ENCODE measurements at regions of chr7 and their contacts with region 1.

Region 1: DNA sequence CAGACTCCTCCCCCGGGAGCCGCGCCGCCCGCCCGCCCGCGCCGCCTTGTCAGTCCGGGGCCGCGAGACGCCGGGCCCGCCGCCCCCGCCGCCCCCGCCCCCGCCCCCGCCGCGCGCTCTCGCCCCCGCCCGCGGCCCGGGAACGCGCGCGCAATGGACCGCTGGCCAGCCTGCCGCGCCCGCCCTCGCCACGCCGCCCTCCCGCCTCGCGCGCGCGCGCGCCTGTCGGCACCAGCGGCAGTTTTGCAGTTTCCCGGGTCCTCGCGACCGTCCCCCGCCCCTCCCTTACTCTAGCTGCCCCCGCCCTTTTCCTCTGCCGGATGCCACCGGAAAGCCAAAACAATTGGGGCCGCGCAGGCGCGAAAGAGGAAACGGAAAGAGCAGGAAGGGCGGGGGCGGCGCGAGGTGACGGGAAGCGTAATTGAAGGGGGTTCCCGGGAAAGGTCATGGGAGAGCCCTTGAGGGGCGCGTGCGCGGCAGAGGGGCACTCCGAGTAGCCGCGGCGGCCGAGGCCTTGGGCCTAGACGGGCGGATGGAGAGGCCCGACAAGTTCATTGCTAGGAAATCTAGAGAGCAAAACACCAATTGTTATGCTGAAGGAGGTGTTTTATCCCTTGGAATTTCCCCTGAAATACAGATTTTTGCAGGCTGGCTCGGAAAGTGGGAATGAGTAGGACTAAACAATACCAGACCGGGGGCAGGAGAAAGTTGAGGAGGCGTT is 400 bp upstream of the KBTBD2 start:
- DNase-seq: peak; percentile 97
- H3K4me3 Mint-ChIP-seq: peak overlapping the region; percentile 93
- H3K27ac Mint-ChIP-seq: peak overlapping the region; percentile 99
- H3K4me1 Mint-ChIP-seq: peaks cover 32% of the 10 kb centered on the region
- H3K27me3 Mint-ChIP-seq: no peaks in the 10 kb centered on the region
- CTCF ChIP-seq: no peak

Region 2: GRCh38 chr7:32879460-32879859 is 12.5 kb before region 1 on chr7:
- CTCF ChIA-PET with region 1: interaction called, 4 read pairs
- POLR2A ChIA-PET with region 1: interaction called, 20 read pairs
- intact Hi-C with region 1: no loop called
- DNase-seq: no peak
- H3K4me3 Mint-ChIP-seq: no peak overlapping the region
- H3K27ac Mint-ChIP-seq: peak overlapping the region; percentile 40
- H3K4me1 Mint-ChIP-seq: peaks cover 24% of the 10 kb centered on the region
- H3K27me3 Mint-ChIP-seq: no peaks in the 10 kb centered on the region
- CTCF ChIP-seq: no peak

Region 3: GRCh38 chr7:32942786-32943653 is 51.1 kb after region 1 on chr7:
- CTCF ChIA-PET with region 1: interaction called, 11 read pairs
- POLR2A ChIA-PET with region 1: interaction called, 107 read pairs
- intact Hi-C with region 1: loop called (anchors 2 kb)
- DNase-seq: peak; percentile 80
- H3K4me3 Mint-ChIP-seq: peak overlapping the region; percentile 85
- H3K27ac Mint-ChIP-seq: peak overlapping the region; percentile 83
- H3K4me1 Mint-ChIP-seq: peaks cover 22% of the 10 kb centered on the region
- H3K27me3 Mint-ChIP-seq: no peaks in the 10 kb centered on the region
- CTCF ChIP-seq: peak; percentile 28

Region 4: DNA sequence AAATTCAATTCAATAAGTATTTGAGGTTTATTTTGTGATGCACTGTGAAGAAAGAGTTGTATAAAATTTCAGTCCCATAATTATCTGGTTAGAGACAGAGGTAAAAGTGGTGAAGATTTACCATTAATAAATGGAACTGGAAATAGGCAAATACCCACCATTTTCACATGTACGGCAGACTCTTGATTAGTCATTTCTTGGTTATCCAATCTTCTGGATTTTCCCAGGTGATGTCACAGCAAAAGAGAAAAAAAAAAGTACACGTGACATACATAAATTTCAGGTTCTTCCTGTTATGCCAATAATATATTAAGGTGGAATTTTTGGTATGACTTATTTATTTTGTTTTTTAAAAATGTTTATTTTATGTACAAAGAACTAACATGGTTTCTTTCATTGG is 143.8 kb after region 1 on chr7:
- CTCF ChIA-PET with region 1: no interaction called
- POLR2A ChIA-PET with region 1: interaction called, 60 read pairs
- intact Hi-C with region 1: no loop called
- DNase-seq: no peak
- H3K4me3 Mint-ChIP-seq: no peak overlapping the region
- H3K27ac Mint-ChIP-seq: no peak overlapping the region
- H3K4me1 Mint-ChIP-seq: peaks cover 16% of the 10 kb centered on the region
- H3K27me3 Mint-ChIP-seq: no peaks in the 10 kb centered on the region
- CTCF ChIP-seq: no peak

Region 5: GRCh38 chr7:33050535-33051318 is 158.8 kb after region 1 on chr7:
- CTCF ChIA-PET with region 1: no interaction called
- POLR2A ChIA-PET with region 1: interaction called, 21 read pairs
- intact Hi-C with region 1: no loop called
- DNase-seq: peak; percentile 60
- H3K4me3 Mint-ChIP-seq: no peak overlapping the region
- H3K27ac Mint-ChIP-seq: no peak overlapping the region
- H3K4me1 Mint-ChIP-seq: peaks cover 7% of the 10 kb centered on the region
- H3K27me3 Mint-ChIP-seq: no peaks in the 10 kb centered on the region
- CTCF ChIP-seq: peak; percentile 58

Measured in MCF 10A (cell line).